ENCODE measurements at regions of chr1 and their contacts with region 1.

Region 1: DNA sequence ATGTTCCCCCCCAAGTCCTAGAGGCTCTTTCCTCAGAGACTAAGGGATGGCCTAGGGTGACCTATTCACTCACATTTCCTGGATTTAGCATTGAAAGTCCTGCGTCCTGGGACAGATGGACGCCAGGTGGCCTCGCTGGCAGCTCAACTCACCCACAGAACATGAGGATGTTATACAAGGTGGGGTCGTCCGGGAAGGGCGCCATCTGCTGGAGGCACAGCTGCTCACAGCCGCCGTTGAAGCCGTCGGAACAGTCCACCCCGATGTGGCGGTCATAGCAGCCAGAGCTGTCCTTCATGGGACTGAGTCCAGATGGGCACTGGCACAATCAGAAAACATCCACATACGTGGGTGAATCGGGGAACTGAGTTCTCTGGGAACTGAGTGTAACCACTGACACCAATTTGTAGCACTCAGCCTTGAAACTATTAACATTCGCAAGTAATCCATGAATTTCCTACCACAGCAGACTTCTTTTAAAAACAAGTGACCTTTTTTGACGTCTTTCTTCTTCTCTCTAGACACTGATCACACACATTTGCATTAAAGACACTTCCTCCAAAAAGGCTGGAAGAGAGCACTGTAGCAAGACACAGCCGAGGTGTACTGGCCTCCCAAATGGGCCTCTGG is 215.4 kb downstream of the ASTN1 start:
- DNase-seq: no peak
- H3K4me3 ChIP-seq: no peak overlapping the region
- H3K27me3 ChIP-seq: peaks cover 4% of the 10 kb centered on the region; the same call in 1 of the 2 replicates
- CTCF ChIP-seq: peak; percentile 71

Region 2: DNA sequence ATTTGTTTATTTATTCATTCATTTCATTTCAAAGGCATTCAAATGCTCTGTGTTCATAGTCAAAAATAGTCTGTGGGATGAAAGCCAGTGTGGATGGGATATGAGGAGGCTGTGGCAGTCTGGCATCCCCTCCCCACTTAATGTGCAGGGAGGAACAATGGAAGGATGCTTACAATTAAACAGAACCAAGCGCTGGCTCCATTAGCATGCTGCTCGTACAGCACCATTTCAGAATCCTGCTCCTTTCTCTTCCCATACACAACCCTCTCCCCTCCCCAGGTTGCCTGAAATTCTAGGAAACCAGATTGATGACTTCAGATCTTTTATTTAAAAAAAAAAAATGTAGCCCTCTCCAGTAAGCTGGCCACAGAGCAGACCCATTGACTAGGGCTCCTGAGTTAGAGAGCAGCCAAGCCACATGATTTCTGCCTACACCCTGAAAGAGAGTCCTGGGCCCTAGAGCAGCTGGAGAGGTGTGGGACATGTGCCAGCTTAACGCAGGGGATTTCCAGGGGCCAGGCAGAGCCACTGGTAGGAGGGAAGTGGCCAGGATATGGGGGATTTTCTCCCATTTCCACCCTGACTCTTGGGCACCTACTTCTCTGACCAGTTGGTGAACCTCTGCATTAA is 10.2 kb after region 1 on chr1:
- CTCF ChIA-PET with region 1: interaction called, 12 read pairs
- POLR2A ChIA-PET with region 1: no interaction called
- DNase-seq: no peak
- H3K4me3 ChIP-seq: no peak overlapping the region
- H3K27me3 ChIP-seq: no peaks in the 10 kb centered on the region
- CTCF ChIP-seq: no peak

Measured in BJ (cell line).